CD8-positive, alpha-beta T cell (primary cell): ENCODE measurements at regions of chr6 and their contacts with region 1.

Region 1: GRCh38 chr6:127855542-127856159 is 45.2 kb downstream of the THEMIS start:
- DNase-seq: peak in 8 of 9 experiments; percentile 25 to 79 (median 62)
- ATAC-seq: peak; percentile 65
- H3K4me3 ChIP-seq: no peak overlapping the region
- H3K4me3 Mint-ChIP-seq: peak overlapping the region; percentile 19
- H3K27ac ChIP-seq: peak overlapping the region in 1 of 2 experiments; percentile 36
- H3K27ac Mint-ChIP-seq: peak overlapping the region; percentile 72
- H3K4me1 ChIP-seq: peaks cover 63% of the 10 kb centered on the region
- H3K4me1 Mint-ChIP-seq: peaks cover 83% of the 10 kb centered on the region
- H3K27me3 ChIP-seq: no peaks in the 10 kb centered on the region
- H3K27me3 Mint-ChIP-seq: no peaks in the 10 kb centered on the region
- CTCF ChIP-seq: peak; percentile 69

Region 2: DNA sequence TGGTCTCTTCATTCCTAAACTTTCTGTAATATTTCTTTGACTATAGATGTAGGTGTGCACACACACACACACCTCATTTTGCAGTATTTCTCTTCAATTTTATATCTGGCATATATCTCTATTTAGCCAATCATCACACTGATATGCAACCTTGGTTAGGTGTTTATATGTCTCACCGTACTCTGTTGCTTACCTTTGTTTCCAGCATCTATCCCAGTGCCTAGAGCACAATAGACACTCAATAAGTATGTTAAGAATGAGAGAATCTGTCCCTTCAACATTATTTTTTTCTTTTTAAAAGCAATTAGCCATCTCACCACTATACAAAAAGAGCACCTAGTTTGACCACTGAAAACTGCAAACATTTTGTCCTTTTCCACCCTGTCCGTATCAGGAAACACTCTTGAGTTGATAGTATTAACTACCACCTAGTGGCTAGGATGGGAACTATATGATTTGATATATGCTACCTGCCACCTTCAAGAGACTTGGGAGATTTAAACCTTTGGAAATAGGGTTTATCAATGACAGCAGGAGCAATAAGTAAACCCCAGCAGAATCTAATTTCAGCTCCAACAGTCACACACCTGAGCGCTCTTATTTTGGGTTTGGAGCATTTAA is 785.9 kb before region 1 on chr6:
- CTCF ChIA-PET with region 1: no interaction called
- POLR2A ChIA-PET with region 1: no interaction called
- intact Hi-C with region 1: no loop called
- DNase-seq: no peak
- ATAC-seq: no peak
- H3K4me3 ChIP-seq: no peak overlapping the region
- H3K4me3 Mint-ChIP-seq: no peak overlapping the region
- H3K27ac ChIP-seq: no peak overlapping the region
- H3K27ac Mint-ChIP-seq: no peak overlapping the region
- H3K4me1 ChIP-seq: no peaks in the 10 kb centered on the region
- H3K4me1 Mint-ChIP-seq: no peaks in the 10 kb centered on the region
- H3K27me3 ChIP-seq: no peaks in the 10 kb centered on the region
- H3K27me3 Mint-ChIP-seq: no peaks in the 10 kb centered on the region
- CTCF ChIP-seq: peak; percentile 15

Region 3: DNA sequence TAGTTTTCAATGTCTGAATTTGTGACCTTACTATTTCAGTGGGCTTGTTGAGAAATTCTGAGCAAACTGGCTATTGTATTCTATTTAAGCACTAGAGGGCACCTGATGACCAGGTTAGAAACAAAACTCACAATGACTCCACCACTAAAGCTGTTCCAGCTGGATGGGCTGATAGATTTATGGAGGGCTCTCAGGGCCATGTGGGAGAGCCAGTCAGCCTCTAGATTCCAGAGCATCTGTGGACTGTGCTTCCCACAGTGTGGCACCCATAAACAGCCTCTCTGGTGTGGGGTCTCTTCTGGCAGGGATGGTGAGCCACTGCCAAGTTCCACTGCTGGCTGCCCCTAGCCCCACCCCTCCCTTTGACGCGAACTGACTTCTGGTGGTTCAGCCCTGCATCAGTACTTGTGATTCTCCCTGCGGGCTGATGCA is 249.5 kb before region 1 on chr6:
- CTCF ChIA-PET with region 1: no interaction called
- POLR2A ChIA-PET with region 1: no interaction called
- intact Hi-C with region 1: no loop called
- DNase-seq: peak in 3 of 9 experiments; percentile 19 to 45 (median 33)
- ATAC-seq: no peak
- H3K4me3 ChIP-seq: no peak overlapping the region
- H3K4me3 Mint-ChIP-seq: no peak overlapping the region
- H3K27ac ChIP-seq: no peak overlapping the region
- H3K27ac Mint-ChIP-seq: no peak overlapping the region
- H3K4me1 ChIP-seq: no peaks in the 10 kb centered on the region
- H3K4me1 Mint-ChIP-seq: no peaks in the 10 kb centered on the region
- H3K27me3 ChIP-seq: no peaks in the 10 kb centered on the region
- H3K27me3 Mint-ChIP-seq: peaks cover 2% of the 10 kb centered on the region
- CTCF ChIP-seq: peak; percentile 15

Region 4: GRCh38 chr6:127762284-127762683 is 93.4 kb before region 1 on chr6:
- CTCF ChIA-PET with region 1: no interaction called
- POLR2A ChIA-PET with region 1: no interaction called
- intact Hi-C with region 1: no loop called
- DNase-seq: peak in 3 of 9 experiments; percentile 15 to 38 (median 18)
- ATAC-seq: peak; percentile 38
- H3K4me3 ChIP-seq: no peak overlapping the region
- H3K4me3 Mint-ChIP-seq: no peak overlapping the region
- H3K27ac ChIP-seq: peak overlapping the region in 1 of 2 experiments; percentile 10
- H3K27ac Mint-ChIP-seq: peak overlapping the region; percentile 75
- H3K4me1 ChIP-seq: peaks cover 38% of the 10 kb centered on the region
- H3K4me1 Mint-ChIP-seq: peaks cover 62% of the 10 kb centered on the region
- H3K27me3 ChIP-seq: no peaks in the 10 kb centered on the region
- H3K27me3 Mint-ChIP-seq: no peaks in the 10 kb centered on the region
- CTCF ChIP-seq: no peak

Region 5: DNA sequence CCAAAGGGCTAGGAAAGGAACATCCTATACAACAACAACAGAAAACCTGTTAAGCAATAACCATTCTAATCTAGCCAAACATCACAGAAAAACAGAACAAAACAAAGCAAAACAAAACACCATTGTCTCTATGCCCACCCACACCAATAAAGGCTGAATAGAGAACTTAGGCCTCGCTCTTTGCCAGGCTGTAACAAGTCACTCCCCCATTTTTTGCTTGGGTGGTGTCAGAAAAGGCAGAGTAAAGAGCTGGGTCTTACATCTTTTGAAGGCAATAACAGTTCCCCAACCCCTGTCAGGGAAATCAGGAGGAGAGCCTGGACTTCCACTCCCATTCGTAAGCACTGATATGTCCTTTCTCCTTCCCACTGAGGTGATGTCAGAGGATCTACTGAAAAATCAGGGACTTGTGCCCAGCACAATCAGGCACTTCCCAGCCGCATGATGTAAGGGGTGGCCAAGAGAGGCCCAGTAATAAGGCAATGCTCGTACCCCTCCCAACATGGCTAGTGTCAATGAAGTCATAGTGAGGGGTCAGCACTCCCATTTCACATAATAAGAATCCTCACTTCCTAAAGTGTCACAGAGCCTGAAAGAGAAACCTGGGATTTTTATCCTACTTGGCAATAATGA is 14.2 kb after region 1 on chr6:
- CTCF ChIA-PET with region 1: interaction called, 20 read pairs
- POLR2A ChIA-PET with region 1: no interaction called
- intact Hi-C with region 1: loop called in 1 of 2 experiments (anchors 1 kb)
- DNase-seq: no peak
- ATAC-seq: peak; percentile 47
- H3K4me3 ChIP-seq: no peak overlapping the region
- H3K4me3 Mint-ChIP-seq: peak overlapping the region; percentile 60
- H3K27ac ChIP-seq: no peak overlapping the region
- H3K27ac Mint-ChIP-seq: peak overlapping the region; percentile 82
- H3K4me1 ChIP-seq: peaks cover 45% of the 10 kb centered on the region
- H3K4me1 Mint-ChIP-seq: peaks cover 67% of the 10 kb centered on the region
- H3K27me3 ChIP-seq: no peaks in the 10 kb centered on the region
- H3K27me3 Mint-ChIP-seq: no peaks in the 10 kb centered on the region
- CTCF ChIP-seq: no peak

Region 6: DNA sequence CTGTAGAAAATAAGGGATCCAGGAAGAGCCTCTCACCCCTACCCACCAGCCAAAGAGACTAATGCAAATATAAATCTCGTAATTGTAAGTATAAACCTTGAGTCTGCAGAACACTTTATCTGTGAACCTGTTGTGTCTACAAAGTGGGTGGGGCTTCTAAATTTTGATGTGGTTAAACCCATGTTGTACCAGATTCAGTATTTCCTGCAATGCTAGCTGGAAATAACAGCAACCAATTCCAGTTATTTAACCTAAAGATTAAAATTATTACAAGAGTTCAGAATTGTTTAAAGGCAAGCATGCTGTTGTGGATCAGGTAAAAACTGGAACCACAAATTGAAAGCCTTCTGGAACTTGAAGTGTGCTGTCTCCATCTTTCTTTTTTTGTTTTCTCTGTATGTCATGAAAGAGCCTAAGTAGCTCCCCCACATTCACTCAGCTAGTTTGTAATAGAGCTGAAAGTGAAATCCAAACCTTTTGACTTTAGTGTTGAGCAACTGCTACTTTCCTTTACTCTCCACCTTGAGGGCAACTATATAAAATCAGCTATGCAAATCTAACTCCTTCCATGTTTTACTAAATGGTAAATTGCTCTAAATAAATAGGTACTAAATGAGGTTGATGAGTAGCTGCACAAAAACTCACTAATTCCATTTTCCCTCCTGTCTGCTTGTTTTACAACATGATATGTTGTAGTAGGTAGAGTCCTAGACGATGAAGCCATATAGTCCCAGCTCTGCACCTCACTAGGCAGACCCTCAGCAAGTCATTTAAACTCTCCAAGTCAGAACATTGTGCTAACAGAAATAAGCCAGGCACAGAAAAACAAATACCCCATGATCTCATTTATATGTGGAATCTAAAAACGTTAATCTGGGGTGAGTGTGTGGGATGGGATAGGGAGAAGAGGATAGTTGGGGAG is 63.1 kb after region 1 on chr6:
- CTCF ChIA-PET with region 1: interaction called, 6 read pairs
- POLR2A ChIA-PET with region 1: interaction called, 6 read pairs
- intact Hi-C with region 1: loop called (anchors 5 kb)
- DNase-seq: peak in 3 of 9 experiments; percentile 24 to 78 (median 61)
- ATAC-seq: peak; percentile 74
- H3K4me3 ChIP-seq: peak overlapping the region; percentile 57 to 62
- H3K4me3 Mint-ChIP-seq: peak overlapping the region; percentile 92
- H3K27ac ChIP-seq: peak overlapping the region; percentile 39 to 58
- H3K27ac Mint-ChIP-seq: peak overlapping the region; percentile 95
- H3K4me1 ChIP-seq: peaks cover 73% of the 10 kb centered on the region
- H3K4me1 Mint-ChIP-seq: peaks cover 80% of the 10 kb centered on the region
- H3K27me3 ChIP-seq: no peaks in the 10 kb centered on the region
- H3K27me3 Mint-ChIP-seq: no peaks in the 10 kb centered on the region
- CTCF ChIP-seq: no peak

Region 7: DNA sequence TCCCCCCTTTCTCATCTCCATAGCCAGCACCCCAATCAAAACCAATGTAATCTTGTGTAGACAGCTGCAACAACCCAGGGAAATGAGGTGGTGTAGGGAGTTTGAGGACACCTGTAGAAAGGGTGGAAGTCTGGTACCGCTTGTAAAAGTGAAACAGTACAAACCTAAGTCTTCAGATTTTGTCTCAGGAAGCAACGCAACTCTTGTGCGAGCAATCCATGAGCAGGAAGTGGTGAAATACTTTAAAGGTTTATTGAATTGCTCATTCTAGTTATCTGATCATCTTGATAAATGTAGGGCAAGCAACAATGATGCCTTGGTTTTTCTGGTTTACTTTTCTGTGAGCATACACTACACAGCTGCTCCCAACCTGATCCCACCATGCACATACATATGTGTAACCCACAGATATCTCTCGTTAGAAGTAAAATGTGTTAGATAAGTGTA is 116.3 kb after region 1 on chr6:
- CTCF ChIA-PET with region 1: interaction called, 15 read pairs
- POLR2A ChIA-PET with region 1: no interaction called
- intact Hi-C with region 1: loop called in 1 of 2 experiments (anchors 5 kb)
- DNase-seq: peak; percentile 24 to 91 (median 53)
- ATAC-seq: peak; percentile 85
- H3K4me3 ChIP-seq: peak overlapping the region; percentile 35 to 55
- H3K4me3 Mint-ChIP-seq: peak overlapping the region; percentile 84
- H3K27ac ChIP-seq: peak overlapping the region; percentile 79 to 85
- H3K27ac Mint-ChIP-seq: peak overlapping the region; percentile 97
- H3K4me1 ChIP-seq: peaks cover 80% of the 10 kb centered on the region
- H3K4me1 Mint-ChIP-seq: peaks cover 83% of the 10 kb centered on the region
- H3K27me3 ChIP-seq: no peaks in the 10 kb centered on the region
- H3K27me3 Mint-ChIP-seq: no peaks in the 10 kb centered on the region
- CTCF ChIP-seq: no peak

Region 8: DNA sequence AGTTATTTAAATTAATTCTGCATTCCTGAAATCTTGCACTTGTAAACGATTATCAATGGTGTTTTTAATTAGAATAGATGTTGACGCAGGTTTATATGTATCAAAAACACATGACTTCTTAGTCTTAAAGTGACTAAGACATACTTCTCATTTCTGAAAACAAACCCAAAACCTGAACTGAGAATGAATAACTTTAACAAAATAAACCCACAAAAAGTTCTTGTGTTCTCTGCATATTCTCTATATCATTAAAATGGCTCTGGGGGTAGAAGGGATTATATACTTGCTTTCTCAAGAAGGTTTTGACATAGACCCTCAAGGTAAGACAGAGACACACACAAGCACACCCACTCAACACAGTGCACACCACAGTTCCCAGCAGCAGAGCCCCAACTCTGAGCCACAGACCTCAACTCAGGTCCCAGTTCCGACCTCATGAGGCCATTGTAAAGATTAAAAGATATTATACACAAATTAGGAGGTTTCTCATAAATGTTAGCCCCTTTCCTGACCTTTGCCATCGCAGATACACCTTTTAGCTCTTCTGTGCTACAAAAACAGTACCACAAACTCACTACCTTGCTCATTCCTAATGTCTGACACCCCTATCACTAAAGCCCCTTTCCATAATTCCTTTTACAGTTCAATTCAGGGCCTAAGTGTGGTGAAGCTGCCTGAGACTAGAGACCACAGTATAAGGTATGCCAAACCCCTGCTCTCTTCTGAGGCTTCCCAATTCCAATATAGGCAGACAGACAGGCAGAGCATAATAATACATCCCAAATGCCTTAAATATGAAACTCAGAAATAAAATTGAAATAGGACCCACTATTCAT is 396.9 kb after region 1 on chr6:
- CTCF ChIA-PET with region 1: no interaction called
- POLR2A ChIA-PET with region 1: no interaction called
- intact Hi-C with region 1: loop called in 1 of 2 experiments (anchors 5 kb)
- DNase-seq: no peak
- ATAC-seq: no peak
- H3K4me3 ChIP-seq: no peak overlapping the region
- H3K4me3 Mint-ChIP-seq: peak overlapping the region; percentile 2
- H3K27ac ChIP-seq: no peak overlapping the region
- H3K27ac Mint-ChIP-seq: peak overlapping the region; percentile 1
- H3K4me1 ChIP-seq: peaks cover 8% of the 10 kb centered on the region
- H3K4me1 Mint-ChIP-seq: peaks cover 20% of the 10 kb centered on the region
- H3K27me3 ChIP-seq: no peaks in the 10 kb centered on the region
- H3K27me3 Mint-ChIP-seq: no peaks in the 10 kb centered on the region
- CTCF ChIP-seq: no peak

Region 9: DNA sequence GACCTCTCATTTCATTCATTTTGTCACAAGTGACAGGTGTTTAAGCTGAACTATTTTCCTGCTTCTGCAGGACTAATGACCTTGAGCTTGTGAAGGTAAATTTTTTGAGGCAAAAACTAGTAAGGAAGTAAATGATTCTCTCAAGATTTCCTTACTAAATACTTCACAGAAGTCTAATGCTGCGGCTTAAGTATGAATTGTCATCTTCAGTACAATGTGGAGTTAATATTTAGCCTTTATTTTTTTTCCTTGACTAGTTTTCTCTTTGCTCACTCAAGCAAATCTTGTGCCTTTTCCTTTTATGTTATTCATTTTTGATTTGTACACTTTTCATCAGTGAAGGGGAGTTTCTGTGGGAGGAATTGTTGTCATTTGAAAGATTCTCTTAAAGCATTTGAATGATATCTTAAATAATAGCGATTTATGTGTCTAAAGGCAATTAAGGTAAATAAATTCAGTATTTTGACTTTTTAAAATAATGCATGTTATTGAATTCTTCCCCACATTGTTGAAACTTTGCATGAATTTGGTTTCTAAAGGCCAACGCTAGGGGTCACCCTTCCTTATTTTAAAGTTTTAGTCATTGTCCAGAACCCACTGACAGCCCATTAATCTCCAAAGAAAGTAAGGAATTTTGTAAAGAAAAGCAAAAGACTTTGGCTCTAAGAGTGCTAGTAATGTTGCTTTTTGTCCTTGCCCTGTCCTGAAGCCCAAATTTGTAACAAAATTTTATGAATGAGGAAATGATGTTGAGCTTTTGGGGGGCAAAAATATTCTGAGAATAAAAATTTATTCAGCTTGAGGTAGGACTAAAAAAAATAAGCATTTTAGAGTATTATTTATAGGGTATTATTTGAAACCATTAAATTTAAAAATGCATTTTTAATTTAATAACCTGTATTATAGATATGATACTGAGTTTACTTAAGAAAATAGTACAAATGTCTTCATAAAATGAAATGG is 869.9 kb after region 1 on chr6:
- CTCF ChIA-PET with region 1: interaction called, 3 read pairs
- POLR2A ChIA-PET with region 1: no interaction called
- intact Hi-C with region 1: loop called (anchors 5 kb)
- DNase-seq: peak in 3 of 9 experiments; percentile 12 to 37 (median 34)
- ATAC-seq: no peak
- H3K4me3 ChIP-seq: no peak overlapping the region
- H3K4me3 Mint-ChIP-seq: no peak overlapping the region
- H3K27ac ChIP-seq: no peak overlapping the region
- H3K27ac Mint-ChIP-seq: no peak overlapping the region
- H3K4me1 ChIP-seq: no peaks in the 10 kb centered on the region
- H3K4me1 Mint-ChIP-seq: no peaks in the 10 kb centered on the region
- H3K27me3 ChIP-seq: no peaks in the 10 kb centered on the region
- H3K27me3 Mint-ChIP-seq: peaks cover 18% of the 10 kb centered on the region
- CTCF ChIP-seq: peak; percentile 74

Region 10: DNA sequence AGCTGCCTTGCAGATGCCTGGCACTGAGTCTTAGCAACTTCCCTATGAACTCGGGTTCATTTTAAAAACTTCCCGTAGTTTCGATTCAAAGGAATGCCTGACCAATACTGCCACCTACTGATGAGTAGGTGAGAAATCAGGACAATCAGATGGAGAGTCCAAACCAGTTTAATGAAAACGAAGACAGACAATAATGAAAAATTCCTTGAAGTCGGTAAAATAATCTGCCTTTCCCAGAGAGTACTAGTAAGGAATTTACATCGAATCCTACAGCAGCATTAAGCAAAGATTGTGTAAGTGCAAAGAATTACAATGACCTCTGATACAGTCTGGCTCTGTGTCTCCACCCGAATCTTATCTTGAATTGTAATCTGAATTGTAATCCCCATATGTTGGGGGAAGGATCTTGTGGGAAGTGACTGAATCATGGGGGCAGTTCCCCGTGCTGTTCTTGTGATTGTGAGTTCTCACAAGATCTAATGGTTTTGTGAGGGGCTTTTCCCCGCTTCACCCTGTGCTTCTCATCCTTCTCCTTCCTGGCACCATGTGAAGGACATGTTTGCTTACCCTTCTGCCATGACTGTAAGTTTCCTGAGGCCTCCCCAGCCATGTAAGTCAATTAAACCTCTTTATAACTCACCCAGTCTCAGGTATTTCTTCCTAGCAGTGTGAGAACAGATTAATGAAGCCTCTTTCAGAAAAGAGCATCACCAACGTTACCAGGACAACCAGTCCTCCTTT is 1719.9 kb after region 1 on chr6:
- CTCF ChIA-PET with region 1: no interaction called
- POLR2A ChIA-PET with region 1: no interaction called
- intact Hi-C with region 1: loop called in 1 of 2 experiments (anchors 10 kb)
- DNase-seq: peak in 2 of 9 experiments; percentile 36 to 55
- ATAC-seq: peak; percentile 42
- H3K4me3 ChIP-seq: peak overlapping the region; percentile 12 to 26
- H3K4me3 Mint-ChIP-seq: peak overlapping the region; percentile 52
- H3K27ac ChIP-seq: no peak overlapping the region
- H3K27ac Mint-ChIP-seq: no peak overlapping the region
- H3K4me1 ChIP-seq: no peaks in the 10 kb centered on the region
- H3K4me1 Mint-ChIP-seq: peaks cover 5% of the 10 kb centered on the region
- H3K27me3 ChIP-seq: no peaks in the 10 kb centered on the region
- H3K27me3 Mint-ChIP-seq: no peaks in the 10 kb centered on the region
- CTCF ChIP-seq: peak; percentile 62